Activated CD4-positive, alpha-beta memory T cell treated with anti-CD3 and anti-CD28 coated beads, Interleukin-2, amount 10 ng/mL, durations not matched to agents 7 days and 5 days (primary cell): ENCODE measurements at regions of chr3 and their contacts with region 1.

Region 1: GRCh38 chr3:49358217-49358883 is at the start of gene GPX1:
- DNase-seq: peak; percentile 84
- H3K4me3 Mint-ChIP-seq: peak within 1 kb of the TSS; percentile 90
- H3K27ac Mint-ChIP-seq: peak within 1 kb of the TSS; percentile 86
- H3K4me1 Mint-ChIP-seq: peaks cover 39% of the 10 kb centered on the region
- H3K27me3 Mint-ChIP-seq: no peaks in the 10 kb centered on the region
- total RNA-seq, gene GPX1: 71.5 to 76.8 TPM

Region 2: DNA sequence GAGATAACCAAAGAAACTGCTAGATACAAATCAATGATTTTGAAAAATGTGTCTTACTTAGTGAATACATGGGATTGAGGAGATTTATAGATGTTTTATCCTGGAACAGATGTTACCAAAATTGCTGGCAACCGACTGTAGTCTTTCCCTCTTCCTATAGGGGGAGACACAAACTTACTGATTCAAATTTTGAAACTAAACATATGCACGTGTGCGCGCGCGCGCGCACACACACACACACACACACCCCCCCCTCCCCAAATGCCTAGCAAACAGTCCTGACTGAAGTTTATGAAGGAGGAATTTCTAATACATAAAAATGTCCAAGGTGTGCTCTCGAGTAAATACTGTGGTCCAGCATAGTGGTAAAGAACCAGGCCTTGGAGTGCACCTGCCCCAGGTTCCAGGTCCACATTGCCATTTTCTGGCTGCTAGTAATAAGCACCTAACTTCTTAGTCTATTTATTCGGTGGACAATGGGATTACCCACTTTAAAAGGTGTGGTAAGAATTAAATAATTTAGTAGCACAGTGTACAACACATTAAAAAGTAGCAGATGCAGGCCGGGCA is 62.8 kb before region 1 on chr3:
- CTCF ChIA-PET with region 1: no interaction called
- POLR2A ChIA-PET with region 1: no interaction called
- DNase-seq: peak; percentile 34
- H3K4me3 Mint-ChIP-seq: no peak overlapping the region
- H3K27ac Mint-ChIP-seq: no peak overlapping the region
- H3K4me1 Mint-ChIP-seq: no peaks in the 10 kb centered on the region
- H3K27me3 Mint-ChIP-seq: no peaks in the 10 kb centered on the region

Region 3: GRCh38 chr3:49313896-49314688 is 44.3 kb before region 1 on chr3:
- CTCF ChIA-PET with region 1: no interaction called
- POLR2A ChIA-PET with region 1: no interaction called
- DNase-seq: no peak
- H3K4me3 Mint-ChIP-seq: no peak overlapping the region
- H3K27ac Mint-ChIP-seq: no peak overlapping the region
- H3K4me1 Mint-ChIP-seq: peaks cover 2% of the 10 kb centered on the region
- H3K27me3 Mint-ChIP-seq: no peaks in the 10 kb centered on the region

Region 4: GRCh38 chr3:49454458-49454857 is 96.1 kb after region 1 on chr3:
- CTCF ChIA-PET with region 1: interaction called, 11 read pairs
- POLR2A ChIA-PET with region 1: no interaction called
- DNase-seq: no peak
- H3K4me3 Mint-ChIP-seq: no peak overlapping the region
- H3K27ac Mint-ChIP-seq: no peak overlapping the region
- H3K4me1 Mint-ChIP-seq: no peaks in the 10 kb centered on the region
- H3K27me3 Mint-ChIP-seq: no peaks in the 10 kb centered on the region